AG04449 (cell line): ENCODE measurements at regions of chr6 and their contacts with region 1.

Region 1: GRCh38 chr6:135423649-135424128 is 73.9 kb downstream of the AHI1 start:
- DNase-seq: no peak
- H3K4me3 ChIP-seq: no peak overlapping the region
- CTCF ChIP-seq: peak; percentile 59

Region 2: DNA sequence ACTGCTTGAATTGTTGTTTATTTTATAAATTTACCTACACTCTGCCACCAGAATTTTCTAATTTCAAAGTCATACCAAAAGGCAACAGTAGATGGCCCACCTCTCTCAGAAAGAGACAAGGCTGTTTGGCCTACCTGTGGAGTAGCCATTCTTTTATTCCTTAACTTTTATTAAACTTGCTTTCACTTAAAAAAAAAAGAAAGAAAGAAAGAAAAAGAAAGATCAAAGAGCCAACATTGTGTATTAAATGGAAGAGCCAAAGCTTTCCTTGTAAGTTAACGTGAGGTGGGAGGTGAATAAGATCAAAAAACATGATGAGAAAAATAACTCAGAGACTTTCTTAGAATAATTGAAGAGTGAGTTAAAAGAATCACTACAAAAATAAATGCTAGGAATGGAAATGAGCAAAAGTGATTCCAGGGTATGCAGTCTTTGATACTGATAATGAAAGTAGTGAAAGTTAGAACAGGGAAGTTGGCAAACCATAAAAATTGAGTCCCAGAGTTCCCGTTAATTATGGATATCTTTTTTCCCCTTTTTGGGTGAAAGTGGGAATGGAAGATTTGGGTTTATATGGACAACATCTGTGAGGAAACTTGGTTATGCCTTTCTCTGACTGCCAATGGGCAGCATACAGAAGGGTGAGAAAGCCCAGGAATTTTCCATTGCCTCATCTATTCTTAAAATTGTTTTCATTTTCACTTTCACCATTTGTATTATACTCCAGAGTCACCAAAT is 278.5 kb before region 1 on chr6:
- CTCF ChIA-PET with region 1: interaction called, 128 read pairs
- POLR2A ChIA-PET with region 1: no interaction called
- DNase-seq: no peak
- H3K4me3 ChIP-seq: no peak overlapping the region
- CTCF ChIP-seq: peak; percentile 50

Region 3: GRCh38 chr6:135167610-135168009 is 256.1 kb before region 1 on chr6:
- CTCF ChIA-PET with region 1: interaction called, 10 read pairs
- POLR2A ChIA-PET with region 1: no interaction called
- DNase-seq: no peak
- H3K4me3 ChIP-seq: no peak overlapping the region
- CTCF ChIP-seq: no peak

Region 4: DNA sequence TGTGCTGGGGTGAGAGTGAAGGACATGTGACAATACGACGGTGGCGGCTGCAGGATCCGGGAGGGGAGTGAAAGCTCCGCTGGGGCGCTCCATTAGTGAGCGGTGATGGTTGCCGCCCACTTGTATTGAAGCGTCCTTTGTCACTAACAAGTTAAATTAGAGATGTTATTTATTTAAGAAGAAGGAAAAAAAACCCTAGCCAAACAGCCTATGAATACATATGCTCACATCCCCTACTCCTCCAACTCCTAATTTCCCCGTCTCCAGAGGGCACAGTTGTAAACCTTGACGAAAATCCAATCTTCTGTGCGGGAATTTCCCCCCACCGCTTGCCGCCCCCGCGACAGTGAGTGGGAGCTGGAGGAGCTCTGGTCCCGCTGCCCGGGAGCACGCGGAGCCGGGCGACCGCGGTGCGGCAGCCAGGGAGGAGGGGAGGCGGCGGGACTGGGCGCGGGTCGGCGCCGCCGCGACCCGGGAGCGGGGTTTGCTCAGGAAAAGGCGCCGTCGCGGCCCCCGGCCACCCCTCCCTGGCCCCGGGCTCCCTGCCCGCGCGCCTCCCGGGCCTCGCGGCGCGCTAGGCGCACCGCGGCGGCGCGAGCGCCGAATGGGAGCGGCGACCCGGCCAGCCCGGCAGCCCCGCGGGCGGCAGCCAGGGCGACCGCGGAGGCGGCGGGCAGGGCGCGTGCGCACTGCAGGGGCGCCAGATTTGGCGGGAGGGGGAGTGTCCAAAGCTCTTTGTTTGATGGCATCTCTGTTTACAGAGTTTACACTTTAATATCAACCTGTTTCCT is 243.0 kb before region 1 on chr6 and contains the start of gene MYB:
- CTCF ChIA-PET with region 1: interaction called, 10 read pairs
- POLR2A ChIA-PET with region 1: no interaction called
- DNase-seq: no peak
- H3K4me3 ChIP-seq: peak within 1 kb of the TSS; percentile 64
- CTCF ChIP-seq: no peak

Region 5: DNA sequence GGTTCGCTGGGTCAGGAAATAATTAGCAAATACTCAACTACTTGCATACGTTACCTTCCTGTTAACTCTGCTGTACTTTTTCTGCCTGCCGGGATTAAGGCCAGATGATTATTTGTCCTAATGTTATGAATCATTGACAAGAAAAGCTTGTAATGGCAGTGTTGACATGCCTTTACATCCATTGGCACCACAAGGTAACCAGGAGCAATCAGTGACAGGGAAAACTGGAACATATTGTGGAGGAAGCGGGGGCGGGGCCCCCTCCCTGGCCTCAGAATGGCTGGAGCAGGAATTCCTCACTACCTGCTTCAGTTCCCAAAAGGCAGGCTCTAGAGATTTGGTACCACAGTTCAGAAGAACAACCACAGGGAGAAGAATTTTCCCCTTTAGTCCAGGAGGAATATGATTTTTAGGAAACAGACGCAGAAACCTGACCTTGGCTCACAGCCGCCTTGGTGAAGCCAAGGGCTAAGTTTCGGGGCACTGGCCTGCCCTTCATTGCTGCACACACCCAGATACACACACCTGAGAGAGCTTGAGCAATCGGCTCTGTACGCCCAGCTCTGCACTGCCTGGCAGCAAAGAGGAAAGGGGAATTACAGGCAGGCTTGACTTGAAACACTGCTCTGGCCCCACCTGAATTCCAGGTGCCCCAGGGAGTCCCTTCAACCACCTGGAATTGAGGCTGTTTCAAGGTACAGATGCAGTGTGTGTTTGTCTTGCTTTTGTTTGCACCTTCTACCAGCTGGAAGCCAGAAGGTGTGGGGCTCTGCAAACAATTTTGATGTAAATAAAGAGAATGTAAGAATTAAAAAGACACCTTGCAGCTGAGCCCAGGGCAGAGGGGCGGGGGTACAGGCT is 152.8 kb before region 1 on chr6:
- CTCF ChIA-PET with region 1: no interaction called
- POLR2A ChIA-PET with region 1: no interaction called
- DNase-seq: no peak
- H3K4me3 ChIP-seq: no peak overlapping the region
- CTCF ChIP-seq: no peak

Region 6: GRCh38 chr6:135314543-135314942 is 109.1 kb before region 1 on chr6:
- CTCF ChIA-PET with region 1: no interaction called
- POLR2A ChIA-PET with region 1: no interaction called
- DNase-seq: no peak
- H3K4me3 ChIP-seq: no peak overlapping the region
- CTCF ChIP-seq: no peak

Region 7: GRCh38 chr6:135403584-135403983 is 20.1 kb before region 1 on chr6:
- CTCF ChIA-PET with region 1: interaction called, 15 read pairs
- POLR2A ChIA-PET with region 1: no interaction called
- DNase-seq: no peak
- H3K4me3 ChIP-seq: no peak overlapping the region
- CTCF ChIP-seq: no peak

Region 8: GRCh38 chr6:135411339-135411738 is 12.3 kb before region 1 on chr6:
- CTCF ChIA-PET with region 1: interaction called, 17 read pairs
- POLR2A ChIA-PET with region 1: no interaction called
- DNase-seq: no peak
- H3K4me3 ChIP-seq: no peak overlapping the region
- CTCF ChIP-seq: no peak

Region 9: DNA sequence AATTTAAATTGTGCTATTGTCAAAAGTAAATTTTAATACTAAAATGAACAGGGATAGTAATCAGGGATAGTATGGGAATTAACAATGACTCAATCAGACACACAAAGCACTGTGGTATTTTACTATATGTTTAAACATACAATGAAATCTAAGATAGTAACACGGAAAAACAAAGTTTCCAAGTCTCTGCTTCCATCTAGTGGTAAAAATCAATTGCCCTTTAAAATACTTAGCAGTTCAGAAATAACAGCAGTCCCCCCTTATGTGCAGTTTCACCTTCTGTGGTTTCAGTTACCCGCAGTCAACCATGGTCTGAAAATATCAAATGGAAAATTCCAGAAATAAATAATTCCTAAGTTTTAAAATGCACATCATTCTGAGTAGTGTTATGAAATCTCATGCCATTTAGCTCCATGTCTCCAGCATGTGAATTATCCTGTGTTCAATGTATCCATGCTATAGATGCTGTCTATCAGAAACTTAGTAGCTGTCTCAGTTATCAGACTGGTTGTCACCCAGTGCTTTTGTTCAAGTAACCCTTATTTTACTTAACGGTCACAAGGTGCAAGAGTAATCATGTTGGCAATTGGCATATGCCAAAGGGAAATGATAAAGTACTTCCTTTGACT is 15.3 kb after region 1 on chr6:
- CTCF ChIA-PET with region 1: interaction called, 15 read pairs
- POLR2A ChIA-PET with region 1: no interaction called
- DNase-seq: no peak
- H3K4me3 ChIP-seq: no peak overlapping the region
- CTCF ChIP-seq: peak; percentile 17

Region 10: GRCh38 chr6:135586841-135587240 is 163.2 kb after region 1 on chr6:
- CTCF ChIA-PET with region 1: no interaction called
- POLR2A ChIA-PET with region 1: no interaction called
- DNase-seq: no peak
- H3K4me3 ChIP-seq: no peak overlapping the region
- CTCF ChIP-seq: no peak

Region 11: GRCh38 chr6:135801755-135802465 is 378.2 kb after region 1 on chr6:
- CTCF ChIA-PET with region 1: no interaction called
- POLR2A ChIA-PET with region 1: no interaction called
- DNase-seq: no peak
- H3K4me3 ChIP-seq: no peak overlapping the region
- CTCF ChIP-seq: no peak